IMR-90 (cell line): ENCODE measurements at regions of chr6 and their contacts with region 1.

Region 1: GRCh38 chr6:113994918-113995342 is 24.0 kb upstream of the HDAC2 start:
- DNase-seq: peak; percentile 93
- ATAC-seq: peak; percentile 82
- H3K4me3 ChIP-seq: no peak overlapping the region
- H3K27ac ChIP-seq: peak overlapping the region; percentile 1; the same call in 1 of the 2 replicates
- H3K4me1 ChIP-seq: peaks cover 6% of the 10 kb centered on the region
- H3K27me3 ChIP-seq: no peaks in the 10 kb centered on the region
- CTCF ChIP-seq: peak; percentile 99; the same call in 1 of the 2 replicates
- POLR2A ChIP-seq: no peak
- RAD21 ChIP-seq: peak; percentile 91

Region 2: GRCh38 chr6:113833537-113833936 is 161.4 kb before region 1 on chr6:
- CTCF ChIA-PET with region 1: no interaction called
- POLR2A ChIA-PET with region 1: no interaction called
- dilution Hi-C with region 1: no loop called
- in situ Hi-C with region 1: no loop called
- intact Hi-C with region 1: no loop called
- DNase-seq: peak; percentile 78
- ATAC-seq: peak; percentile 56
- H3K4me3 ChIP-seq: no peak overlapping the region
- H3K27ac ChIP-seq: no peak overlapping the region
- H3K4me1 ChIP-seq: peaks cover 2% of the 10 kb centered on the region; the same call in 1 of the 2 replicates
- H3K27me3 ChIP-seq: no peaks in the 10 kb centered on the region
- CTCF ChIP-seq: no peak
- POLR2A ChIP-seq: no peak
- RAD21 ChIP-seq: no peak

Region 3: GRCh38 chr6:113980937-113981554 is 13.9 kb before region 1 on chr6:
- CTCF ChIA-PET with region 1: interaction called, 12 read pairs
- POLR2A ChIA-PET with region 1: no interaction called
- dilution Hi-C with region 1: no loop called
- in situ Hi-C with region 1: no loop called
- intact Hi-C with region 1: no loop called
- DNase-seq: peak; percentile 31
- ATAC-seq: peak; percentile 82
- H3K4me3 ChIP-seq: no peak overlapping the region
- H3K27ac ChIP-seq: no peak overlapping the region
- H3K4me1 ChIP-seq: no peaks in the 10 kb centered on the region; the same call in 1 of the 2 replicates
- H3K27me3 ChIP-seq: no peaks in the 10 kb centered on the region
- CTCF ChIP-seq: peak; percentile 47
- POLR2A ChIP-seq: no peak
- RAD21 ChIP-seq: peak; percentile 54

Region 4: DNA sequence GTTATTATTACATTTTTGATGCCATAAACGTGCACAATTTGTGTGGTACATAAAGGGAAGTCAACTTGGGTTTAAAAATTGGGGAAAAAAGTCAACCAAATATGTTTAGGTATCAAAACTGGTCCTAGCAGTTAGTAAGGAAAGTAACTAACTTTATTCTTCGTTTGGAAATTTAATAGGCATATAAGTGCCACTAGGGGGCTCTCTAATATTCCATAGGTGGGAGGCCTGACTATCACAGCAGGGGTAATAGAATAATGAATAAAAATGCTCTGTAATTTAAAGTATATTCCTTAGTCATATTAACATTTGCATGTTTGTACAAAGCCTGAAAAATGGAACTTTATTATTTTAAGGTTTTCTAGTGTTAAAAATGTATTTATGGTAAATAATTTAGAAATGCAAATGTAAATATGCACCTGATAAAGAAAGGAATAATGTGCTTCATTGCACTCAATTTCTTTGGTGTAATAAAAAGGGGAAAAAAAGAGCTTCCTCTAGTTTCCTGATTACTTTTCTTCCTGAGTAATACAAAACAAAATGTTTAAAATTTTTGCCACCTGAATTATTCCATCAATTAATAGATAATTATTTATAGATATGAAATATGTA is 101.7 kb after region 1 on chr6:
- CTCF ChIA-PET with region 1: interaction called, 12 read pairs
- POLR2A ChIA-PET with region 1: no interaction called
- dilution Hi-C with region 1: no loop called
- in situ Hi-C with region 1: no loop called
- intact Hi-C with region 1: no loop called
- DNase-seq: peak; percentile 28
- ATAC-seq: no peak
- H3K4me3 ChIP-seq: no peak overlapping the region
- H3K27ac ChIP-seq: no peak overlapping the region
- H3K4me1 ChIP-seq: peaks cover 4% of the 10 kb centered on the region
- H3K27me3 ChIP-seq: no peaks in the 10 kb centered on the region
- CTCF ChIP-seq: peak; percentile 72
- POLR2A ChIP-seq: no peak
- RAD21 ChIP-seq: peak; percentile 56

Region 5: GRCh38 chr6:114284281-114284680 is 289.4 kb after region 1 on chr6:
- CTCF ChIA-PET with region 1: interaction called, 3 read pairs
- POLR2A ChIA-PET with region 1: no interaction called
- dilution Hi-C with region 1: no loop called
- in situ Hi-C with region 1: loop called (anchors 25 kb)
- intact Hi-C with region 1: no loop called
- DNase-seq: no peak
- ATAC-seq: no peak
- H3K4me3 ChIP-seq: no peak overlapping the region
- H3K27ac ChIP-seq: no peak overlapping the region
- H3K4me1 ChIP-seq: no peaks in the 10 kb centered on the region
- H3K27me3 ChIP-seq: peaks cover 7% of the 10 kb centered on the region
- CTCF ChIP-seq: no peak
- POLR2A ChIP-seq: no peak
- RAD21 ChIP-seq: no peak

Region 6: GRCh38 chr6:114342826-114343780 is 348.2 kb after region 1 on chr6 and contains the start of gene HS3ST5:
- CTCF ChIA-PET with region 1: interaction called, 5 read pairs
- POLR2A ChIA-PET with region 1: no interaction called
- dilution Hi-C with region 1: no loop called
- in situ Hi-C with region 1: no loop called
- intact Hi-C with region 1: loop called (anchors 10 kb)
- DNase-seq: peak; percentile 8
- ATAC-seq: peak; percentile 77
- H3K4me3 ChIP-seq: peak within 1 kb of the TSS; percentile 61
- H3K27ac ChIP-seq: no peak within 1 kb of the TSS
- H3K4me1 ChIP-seq: no peaks in the 10 kb centered on the region; the same call in 1 of the 2 replicates
- H3K27me3 ChIP-seq: peaks cover 27% of the 10 kb centered on the region
- CTCF ChIP-seq: peak; percentile 35
- POLR2A ChIP-seq: no peak
- RAD21 ChIP-seq: peak; percentile 46
- total RNA-seq, gene HS3ST5: not detected in 2 replicates

Region 7: GRCh38 chr6:115896538-115897129 is 1901.7 kb after region 1 on chr6:
- CTCF ChIA-PET with region 1: interaction called, 3 read pairs
- POLR2A ChIA-PET with region 1: no interaction called
- dilution Hi-C with region 1: no loop called
- in situ Hi-C with region 1: no loop called
- intact Hi-C with region 1: loop called (anchors 10 kb)
- DNase-seq: peak; percentile 29
- ATAC-seq: peak; percentile 77
- H3K4me3 ChIP-seq: no peak overlapping the region
- H3K27ac ChIP-seq: no peak overlapping the region
- H3K4me1 ChIP-seq: no peaks in the 10 kb centered on the region
- H3K27me3 ChIP-seq: no peaks in the 10 kb centered on the region
- CTCF ChIP-seq: peak; percentile 79
- POLR2A ChIP-seq: no peak
- RAD21 ChIP-seq: peak; percentile 76